ENCODE measurements at regions of chr1 and their contacts with region 1.

Region 1: GRCh38 chr1:32179443-32180185 is at the start of gene TXLNA:
- H3K4me3 ChIP-seq: peak within 1 kb of the TSS; percentile 75
- H3K27ac ChIP-seq: peak within 1 kb of the TSS; percentile 76
- H3K4me1 ChIP-seq: peaks cover 6% of the 10 kb centered on the region; the same call in 1 of the 2 replicates
- CTCF ChIP-seq: peak; percentile 49; the same call in 1 of the 2 replicates

Region 2: GRCh38 chr1:32072622-32073298 is 106.9 kb before region 1 on chr1 and contains the start of gene TMEM39B:
- CTCF ChIA-PET with region 1: interaction called, 5 read pairs
- POLR2A ChIA-PET with region 1: interaction called, 22 read pairs
- H3K4me3 ChIP-seq: peak within 1 kb of the TSS; percentile 92
- H3K27ac ChIP-seq: peak within 1 kb of the TSS; percentile 62
- H3K4me1 ChIP-seq: no peaks in the 10 kb centered on the region
- CTCF ChIP-seq: peak; percentile 10; the same call in 1 of the 2 replicates

Region 3: GRCh38 chr1:32107742-32108661 is 71.6 kb before region 1 on chr1 and contains the start of gene KPNA6:
- CTCF ChIA-PET with region 1: interaction called, 5 read pairs
- POLR2A ChIA-PET with region 1: interaction called, 26 read pairs
- H3K4me3 ChIP-seq: peak within 1 kb of the TSS; percentile 94
- H3K27ac ChIP-seq: peak within 1 kb of the TSS; percentile 72
- H3K4me1 ChIP-seq: peaks cover 9% of the 10 kb centered on the region
- CTCF ChIP-seq: no peak

Region 4: GRCh38 chr1:32192220-32192948 is 12.8 kb after region 1 on chr1:
- CTCF ChIA-PET with region 1: no interaction called
- POLR2A ChIA-PET with region 1: interaction called, 25 read pairs
- H3K4me3 ChIP-seq: no peak overlapping the region
- H3K27ac ChIP-seq: no peak overlapping the region
- H3K4me1 ChIP-seq: no peaks in the 10 kb centered on the region
- CTCF ChIP-seq: no peak

Region 5: GRCh38 chr1:32200226-32201010 is 20.8 kb after region 1 on chr1 and contains the start of gene CCDC28B:
- CTCF ChIA-PET with region 1: interaction called, 4 read pairs
- POLR2A ChIA-PET with region 1: interaction called, 25 read pairs
- H3K4me3 ChIP-seq: peak within 1 kb of the TSS; percentile 49
- H3K27ac ChIP-seq: no peak within 1 kb of the TSS; the same call in 1 of the 2 replicates
- H3K4me1 ChIP-seq: no peaks in the 10 kb centered on the region; the same call in 1 of the 2 replicates
- CTCF ChIP-seq: no peak

Region 6: DNA sequence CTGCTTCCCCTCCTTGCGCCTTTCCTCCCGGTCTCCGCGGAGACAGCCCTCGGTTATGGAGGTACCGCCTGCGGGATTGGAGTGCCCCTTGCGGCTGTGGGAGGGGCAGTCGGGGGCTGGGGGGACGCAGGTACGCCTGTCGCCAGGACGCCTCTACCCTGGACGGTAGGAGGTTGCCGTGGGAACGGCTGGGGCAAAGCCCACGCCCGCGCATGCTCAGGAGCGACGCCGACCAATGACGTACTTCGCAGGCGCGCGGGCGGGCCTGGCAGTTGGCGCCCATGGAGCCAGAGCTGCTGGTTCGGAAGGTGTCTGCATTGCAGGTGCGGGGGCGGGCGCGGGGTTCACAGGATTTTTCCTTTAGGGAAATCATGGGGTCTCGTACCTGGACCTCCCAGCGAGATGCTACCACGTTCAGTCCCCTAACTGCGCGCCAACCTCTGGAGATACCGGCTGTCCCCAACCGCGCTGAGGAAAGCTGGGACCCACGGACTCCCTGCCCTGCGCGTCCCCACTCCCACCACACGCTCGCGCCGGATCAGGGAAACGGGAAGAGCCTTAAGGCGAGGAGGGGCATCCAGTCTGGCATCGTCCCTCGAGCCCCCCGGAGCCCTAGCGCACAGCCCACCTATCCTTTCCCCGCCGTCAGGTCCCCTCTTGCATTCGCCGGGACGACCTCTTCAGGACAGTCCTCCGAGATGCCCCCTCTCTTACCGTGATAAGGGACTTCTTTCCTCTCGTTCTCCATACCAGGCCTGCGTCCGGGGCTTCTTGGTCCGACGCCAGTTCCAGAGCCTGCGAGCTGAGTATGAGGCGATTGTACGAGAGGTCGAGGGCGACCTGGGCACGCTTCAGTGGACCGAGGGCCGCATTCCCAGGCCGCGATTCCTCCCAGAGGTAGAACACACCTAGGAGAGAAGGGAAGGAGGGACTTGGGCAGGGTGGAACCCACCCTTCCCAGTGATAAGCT is 26.1 kb after region 1 on chr1 and contains the start of gene IQCC:
- CTCF ChIA-PET with region 1: interaction called, 4 read pairs
- POLR2A ChIA-PET with region 1: interaction called, 25 read pairs
- H3K4me3 ChIP-seq: peak within 1 kb of the TSS; percentile 73
- H3K27ac ChIP-seq: peak within 1 kb of the TSS; percentile 48; the same call in 1 of the 2 replicates
- H3K4me1 ChIP-seq: peaks cover 4% of the 10 kb centered on the region
- CTCF ChIP-seq: peak; percentile 95

Measured in HEK293 (cell line).